Naive thymus-derived CD8-positive, alpha-beta T cell (primary cell): ENCODE measurements at regions of chr7 and their contacts with region 1.

Region 1: GRCh38 chr7:128409596-128410160 is at the start of gene IMPDH1:
- DNase-seq: peak; percentile 60 to 91 (median 84)
- ATAC-seq: peak; percentile 79 to 80
- H3K4me3 Mint-ChIP-seq: peak within 1 kb of the TSS; percentile 84 to 93 (median 90)
- H3K27ac Mint-ChIP-seq: peak within 1 kb of the TSS; percentile 71 to 94 (median 91)
- H3K4me1 Mint-ChIP-seq: peaks cover 20 to 42% (median 39%) of the 10 kb centered on the region in 4 donors
- H3K27me3 Mint-ChIP-seq: peaks cover 0 to 4% (median 0%) of the 10 kb centered on the region in 5 donors
- polyA plus RNA-seq, gene IMPDH1: 30.2 to 39.5 (median 32.9) TPM

Region 2: DNA sequence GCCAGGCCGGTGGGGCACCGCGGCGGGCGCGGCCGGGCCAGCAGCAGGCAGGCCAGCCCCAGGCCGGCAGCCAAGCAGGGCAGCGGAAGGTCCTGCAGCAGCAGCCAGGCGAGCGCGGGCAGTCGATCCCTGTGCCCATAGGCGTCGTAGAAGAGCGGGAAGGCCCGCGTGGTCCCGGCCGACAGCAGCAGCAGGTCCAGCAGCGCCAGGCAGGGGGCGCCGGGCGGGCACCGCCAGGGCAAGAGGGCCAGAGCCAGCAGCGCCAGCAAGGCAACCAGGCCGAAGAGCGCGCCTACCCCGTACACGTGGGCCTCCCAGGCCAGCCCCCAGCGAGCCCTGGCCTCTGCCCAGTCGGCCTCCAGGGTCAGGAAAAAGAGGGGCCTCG is 57.5 kb before region 1 on chr7:
- POLR2A ChIA-PET with region 1: interaction called, 12 read pairs
- DNase-seq: peak in 7 of 10 donors; percentile 11 to 65 (median 32)
- ATAC-seq: peak; percentile 56 to 60
- H3K4me3 Mint-ChIP-seq: no peak overlapping the region
- H3K27ac Mint-ChIP-seq: no peak overlapping the region
- H3K4me1 Mint-ChIP-seq: peaks cover 4 to 18% (median 8%) of the 10 kb centered on the region in 4 donors
- H3K27me3 Mint-ChIP-seq: peaks cover 12 to 45% (median 30%) of the 10 kb centered on the region in 5 donors

Region 3: GRCh38 chr7:128425850-128426249 is 16.2 kb after region 1 on chr7:
- POLR2A ChIA-PET with region 1: interaction called, 11 read pairs
- DNase-seq: peak; percentile 51 to 87 (median 74)
- ATAC-seq: peak; percentile 82 to 88
- H3K4me3 Mint-ChIP-seq: no peak overlapping the region
- H3K27ac Mint-ChIP-seq: no peak overlapping the region
- H3K4me1 Mint-ChIP-seq: peaks cover 0 to 20% (median 1%) of the 10 kb centered on the region in 4 donors
- H3K27me3 Mint-ChIP-seq: peaks cover 3 to 15% (median 9%) of the 10 kb centered on the region in 5 donors

Region 4: GRCh38 chr7:128455551-128456254 is 46.0 kb after region 1 on chr7 and contains the start of gene HILPDA:
- POLR2A ChIA-PET with region 1: interaction called, 10 read pairs
- DNase-seq: peak; percentile 89 to 97 (median 92)
- ATAC-seq: peak; percentile 87 to 91
- H3K4me3 Mint-ChIP-seq: peak within 1 kb of the TSS; percentile 87 to 95 (median 93)
- H3K27ac Mint-ChIP-seq: peak within 1 kb of the TSS; percentile 86 to 97 (median 94)
- H3K4me1 Mint-ChIP-seq: peaks cover 14 to 32% (median 29%) of the 10 kb centered on the region in 4 donors
- H3K27me3 Mint-ChIP-seq: peaks cover 0 to 4% (median 0%) of the 10 kb centered on the region in 5 donors
- polyA plus RNA-seq, gene HILPDA: 2.9 to 3.4 (median 3.2) TPM